Left ventricle myocardium inferior (tissue), 1 donor: ENCODE measurements at regions of chr2 and their contacts with region 1.

Region 1: DNA sequence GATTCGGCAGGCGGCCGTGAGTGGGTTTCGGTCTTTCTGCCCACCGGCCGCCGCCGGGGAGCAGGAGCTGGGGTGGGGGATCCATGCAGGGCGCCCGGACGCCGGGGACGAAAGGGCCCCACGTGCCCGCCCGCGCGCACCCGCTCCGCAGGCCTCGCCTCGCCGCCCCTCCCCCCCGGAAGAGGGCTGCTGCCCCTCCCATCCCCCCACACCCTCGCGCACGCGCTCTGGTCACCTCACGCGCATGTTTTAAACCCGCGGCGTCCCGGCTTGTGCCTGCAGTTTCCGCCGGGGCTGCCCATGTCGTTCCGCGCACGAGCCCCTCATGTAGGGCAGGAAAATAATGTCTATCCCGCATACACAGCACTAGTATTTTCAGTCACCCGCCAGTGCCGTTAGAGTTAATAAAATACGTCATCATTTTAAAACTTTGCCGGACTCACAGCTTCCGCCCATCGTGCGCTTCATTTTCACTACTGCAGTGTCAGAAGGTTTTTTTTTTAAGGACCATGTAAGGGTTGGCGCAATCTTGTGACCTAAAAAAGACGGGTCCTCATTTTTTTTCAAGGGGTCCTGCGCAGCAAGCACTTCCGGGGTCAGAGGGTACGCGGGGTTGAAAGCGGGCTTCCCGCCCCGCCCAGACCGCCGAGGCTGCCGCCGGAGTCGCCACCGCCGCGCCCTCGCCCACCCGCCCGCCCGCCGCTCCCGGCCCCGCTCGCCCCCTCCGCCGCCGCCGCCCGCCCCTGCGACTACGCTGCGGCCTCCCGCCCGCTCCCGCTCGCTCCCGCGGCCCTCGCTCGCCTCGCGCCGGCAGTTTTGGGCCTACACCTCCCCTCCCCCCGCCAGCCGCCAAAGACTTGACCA is at the start of gene PCBP1:
- DNase-seq: peak; percentile 97
- H3K4me3 ChIP-seq: peak within 1 kb of the TSS; percentile 82
- H3K27ac ChIP-seq: peak within 1 kb of the TSS; percentile 100
- H3K4me1 ChIP-seq: peaks cover 67% of the 10 kb centered on the region
- H3K27me3 ChIP-seq: no peaks in the 10 kb centered on the region
- CTCF ChIP-seq: no peak
- total RNA-seq, gene PCBP1: 205 TPM

Region 2: DNA sequence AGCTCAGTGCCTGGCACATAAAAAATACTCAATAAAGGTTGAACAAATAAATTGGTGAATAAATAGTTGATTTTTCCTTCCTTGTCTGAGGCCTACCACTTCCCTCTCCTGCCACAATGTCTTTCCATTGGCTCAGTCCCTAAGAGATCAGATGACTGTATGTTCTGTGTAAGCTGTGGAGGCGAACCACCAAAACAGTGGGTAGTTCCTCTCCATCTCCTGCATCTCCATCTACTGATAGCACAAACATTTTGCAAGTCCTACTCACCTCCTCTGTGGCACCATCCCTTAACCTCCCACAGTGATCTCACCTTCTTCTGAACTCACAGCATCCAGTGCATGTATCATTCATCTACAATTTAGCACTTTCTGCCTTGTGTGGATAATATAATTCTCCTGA is 50.4 kb after region 1 on chr2:
- intact Hi-C with region 1: loop called (anchors 5 kb)
- DNase-seq: no peak
- H3K4me3 ChIP-seq: no peak overlapping the region
- H3K27ac ChIP-seq: peak overlapping the region; percentile 4
- H3K4me1 ChIP-seq: peaks cover 55% of the 10 kb centered on the region
- H3K27me3 ChIP-seq: no peaks in the 10 kb centered on the region
- CTCF ChIP-seq: no peak

Region 3: DNA sequence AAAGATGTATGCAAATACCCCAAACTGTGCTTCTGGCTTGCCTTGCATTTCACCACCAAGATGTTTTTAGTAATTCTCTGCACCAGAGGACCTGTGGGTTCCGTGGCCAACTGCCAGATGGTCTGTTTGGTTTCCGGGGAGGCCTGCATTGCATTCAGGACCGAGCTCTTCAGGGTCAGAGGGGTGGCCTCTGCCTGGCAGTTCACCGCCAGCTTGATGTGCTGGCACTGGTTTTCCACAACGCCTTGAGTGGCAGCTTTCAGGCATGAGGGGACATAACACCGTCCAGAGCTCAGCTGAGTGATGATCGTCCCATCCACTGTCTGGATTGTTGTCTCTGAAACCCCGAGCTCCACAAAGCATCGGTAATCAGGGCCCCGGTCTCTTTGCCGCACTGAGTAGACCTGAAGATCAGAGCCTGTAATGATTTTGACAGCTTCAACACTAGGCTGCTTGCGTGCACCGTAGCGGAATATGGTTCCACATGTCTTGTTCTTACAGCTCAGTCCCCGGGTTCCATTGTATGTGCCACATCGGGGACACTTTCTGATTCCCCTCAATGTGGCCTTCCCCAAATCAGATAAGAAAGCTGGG is 94.4 kb after region 1 on chr2:
- intact Hi-C with region 1: no loop called
- DNase-seq: no peak
- H3K4me3 ChIP-seq: no peak overlapping the region
- H3K27ac ChIP-seq: no peak overlapping the region
- H3K4me1 ChIP-seq: no peaks in the 10 kb centered on the region
- H3K27me3 ChIP-seq: no peaks in the 10 kb centered on the region
- CTCF ChIP-seq: no peak